Aorta (tissue), 5 donors: ENCODE measurements at regions of chr7 and their contacts with region 1.

Region 1: DNA sequence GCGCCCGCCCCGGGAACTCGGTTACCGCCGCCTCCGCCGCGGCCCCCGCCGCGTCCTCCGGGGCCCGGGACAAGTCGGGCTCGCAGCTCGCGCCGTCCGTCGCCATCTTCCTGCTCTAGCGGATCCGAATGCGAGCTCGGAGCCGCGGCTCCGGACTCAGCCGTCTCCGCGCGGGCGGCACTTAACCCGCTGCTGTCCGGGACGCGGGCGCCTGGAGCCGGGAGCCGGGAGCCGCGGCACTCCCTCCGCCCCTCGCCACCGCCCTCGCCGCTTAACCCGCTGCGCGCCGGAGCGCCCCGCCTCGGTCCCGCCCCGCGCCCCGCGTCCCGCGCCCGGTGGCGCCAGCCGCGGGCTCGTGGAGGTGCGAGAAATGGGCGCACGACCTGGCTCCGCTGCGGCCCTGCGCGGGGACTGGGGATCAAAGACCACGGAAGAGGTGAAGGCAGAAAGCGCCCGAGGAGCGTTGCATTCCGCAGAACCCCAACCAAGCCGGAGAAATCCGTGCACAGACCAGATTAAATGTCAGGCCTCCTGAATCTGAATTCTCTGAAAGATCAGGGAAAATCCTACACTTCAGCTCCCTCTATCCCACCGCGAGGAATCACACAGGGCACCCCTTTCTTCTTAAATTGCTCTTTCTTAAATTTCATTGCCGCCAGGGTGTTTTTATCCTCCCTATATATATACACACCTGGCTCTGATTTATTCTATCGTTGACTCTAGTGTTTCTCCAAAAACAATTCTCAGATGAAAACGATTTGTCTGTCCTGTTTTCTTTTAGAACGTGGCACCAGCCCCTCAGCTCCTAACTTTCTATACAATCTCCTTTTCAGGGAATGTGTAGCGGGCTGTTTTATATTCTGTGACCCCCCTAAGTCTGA is at the start of gene CTTNBP2:
- DNase-seq: peak; percentile 67 to 89
- ATAC-seq: peak; percentile 69
- H3K4me3 ChIP-seq: peak within 1 kb of the TSS; percentile 86 to 97
- H3K27ac ChIP-seq: no peak within 1 kb of the TSS
- H3K4me1 ChIP-seq: no peaks in the 10 kb centered on the region
- H3K27me3 ChIP-seq: no peaks in the 10 kb centered on the region
- total RNA-seq, gene CTTNBP2: 15.9 to 29.6 TPM

Region 2: GRCh38 chr7:117750612-117751563 is 122.7 kb before region 1 on chr7:
- intact Hi-C with region 1: loop called in 1 of 2 experiments (anchors 5 kb)
- DNase-seq: no peak
- ATAC-seq: no peak
- H3K4me3 ChIP-seq: no peak overlapping the region
- H3K27ac ChIP-seq: no peak overlapping the region
- H3K4me1 ChIP-seq: no peaks in the 10 kb centered on the region
- H3K27me3 ChIP-seq: no peaks in the 10 kb centered on the region

Region 3: GRCh38 chr7:117780832-117781231 is 92.7 kb before region 1 on chr7:
- intact Hi-C with region 1: loop called in 1 of 2 experiments (anchors 10 kb)
- DNase-seq: no peak
- ATAC-seq: peak; percentile 54
- H3K4me3 ChIP-seq: no peak overlapping the region
- H3K27ac ChIP-seq: peak overlapping the region; percentile 28 to 57
- H3K4me1 ChIP-seq: no peaks in the 10 kb centered on the region
- H3K27me3 ChIP-seq: no peaks in the 10 kb centered on the region

Region 4: DNA sequence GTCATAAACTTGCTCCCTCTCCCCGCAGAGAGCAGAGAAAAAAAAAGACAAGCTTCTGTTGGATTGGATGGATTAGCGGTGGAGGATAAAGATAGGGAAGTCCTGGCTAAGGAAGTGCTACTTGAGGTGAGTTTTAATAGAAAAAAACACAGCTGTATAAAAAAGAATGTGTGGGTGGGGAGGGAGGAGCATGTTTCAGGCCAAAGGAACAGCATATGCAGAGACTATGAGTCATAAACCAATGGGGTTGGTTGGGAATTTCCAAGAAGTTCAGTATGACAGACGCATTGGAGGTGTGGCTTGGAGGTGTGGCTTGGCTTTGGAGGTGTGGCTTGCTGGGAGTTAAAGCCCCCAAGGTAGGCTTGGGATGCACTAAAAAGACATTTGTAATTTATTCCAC is 207.4 kb after region 1 on chr7:
- intact Hi-C with region 1: no loop called
- DNase-seq: no peak
- ATAC-seq: no peak
- H3K4me3 ChIP-seq: no peak overlapping the region
- H3K27ac ChIP-seq: no peak overlapping the region
- H3K4me1 ChIP-seq: no peaks in the 10 kb centered on the region
- H3K27me3 ChIP-seq: no peaks in the 10 kb centered on the region

Region 5: DNA sequence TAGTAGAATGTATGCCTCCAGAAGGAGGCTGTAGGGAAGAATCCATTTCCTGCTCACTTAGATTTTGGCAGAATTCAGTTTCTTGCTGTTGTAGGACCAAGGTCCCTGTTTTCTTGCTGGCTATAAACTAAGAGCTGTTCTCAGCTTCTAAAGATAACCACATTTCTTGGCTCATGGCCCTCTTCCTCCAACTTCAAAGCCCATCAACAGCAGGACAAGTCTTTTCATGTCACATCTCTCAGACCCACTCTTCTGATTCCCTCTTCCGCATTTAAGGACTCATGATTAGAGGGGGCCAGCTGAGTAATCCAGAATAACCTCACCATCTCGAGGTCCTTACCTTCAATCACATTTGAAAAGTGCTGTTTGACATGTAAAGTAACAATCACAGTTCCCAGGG is 302.2 kb after region 1 on chr7:
- intact Hi-C with region 1: loop called in 1 of 2 experiments (anchors 10 kb)
- DNase-seq: no peak
- ATAC-seq: no peak
- H3K4me3 ChIP-seq: no peak overlapping the region
- H3K27ac ChIP-seq: no peak overlapping the region
- H3K4me1 ChIP-seq: no peaks in the 10 kb centered on the region
- H3K27me3 ChIP-seq: no peaks in the 10 kb centered on the region